Heart right ventricle (tissue), 16 donors: ENCODE measurements at regions of chr6 and their contacts with region 1.

Region 1: GRCh38 chr6:138287144-138287955 is 69.1 kb upstream of the PBOV1 start:
- DNase-seq: no peak
- ATAC-seq: peak in 5 of 8 donors; percentile 4 to 47 (median 28)
- H3K4me3 ChIP-seq: no peak overlapping the region
- H3K27ac ChIP-seq: no peak overlapping the region
- H3K4me1 ChIP-seq: no peaks in the 10 kb centered on the region
- H3K27me3 ChIP-seq: no peaks in the 10 kb centered on the region
- CTCF ChIP-seq: peak; percentile 10 to 65 (median 53)

Region 2: GRCh38 chr6:138001750-138002349 is 285.5 kb before region 1 on chr6:
- intact Hi-C with region 1: loop called in 2 of 10 experiments (anchors 10 kb)
- DNase-seq: peak in 1 of 2 donors; percentile 51
- ATAC-seq: peak in 3 of 8 donors; percentile 41 to 48 (median 47)
- H3K4me3 ChIP-seq: no peak overlapping the region
- H3K27ac ChIP-seq: no peak overlapping the region
- H3K4me1 ChIP-seq: peaks cover 0 to 3% (median 0%) of the 10 kb centered on the region in 9 donors
- H3K27me3 ChIP-seq: peaks cover 0 to 3% (median 0%) of the 10 kb centered on the region in 7 donors
- CTCF ChIP-seq: peak; percentile 67 to 91 (median 86)

Region 3: DNA sequence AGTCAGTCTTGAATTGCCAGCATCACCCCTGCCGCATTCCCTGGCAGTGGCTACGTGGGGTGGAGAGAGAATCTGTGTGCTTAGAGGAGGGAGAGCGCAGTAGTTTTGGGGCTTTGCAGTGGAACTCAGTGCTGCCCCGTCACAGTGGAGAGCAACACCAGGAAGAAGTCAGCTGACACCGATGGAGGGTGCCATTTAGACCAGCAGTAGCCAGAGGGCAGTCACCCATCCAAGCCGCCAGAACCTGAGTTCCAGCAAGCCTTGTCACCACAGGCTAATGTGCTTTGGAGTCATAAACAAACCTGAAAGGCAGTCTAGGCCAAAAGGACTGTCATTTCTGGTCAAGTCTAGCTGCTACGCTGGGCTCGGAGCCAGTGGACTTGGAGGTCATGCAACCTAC is 158.2 kb before region 1 on chr6:
- intact Hi-C with region 1: loop called in 1 of 10 experiments (anchors 5 kb)
- DNase-seq: no peak
- ATAC-seq: peak in 1 of 8 donors; percentile 27
- H3K4me3 ChIP-seq: no peak overlapping the region
- H3K27ac ChIP-seq: no peak overlapping the region
- H3K4me1 ChIP-seq: no peaks in the 10 kb centered on the region
- H3K27me3 ChIP-seq: no peaks in the 10 kb centered on the region
- CTCF ChIP-seq: peak in 4 of 9 donors; percentile 6 to 14 (median 10)

Region 4: GRCh38 chr6:138393871-138394783 is 106.8 kb after region 1 on chr6:
- intact Hi-C with region 1: loop called in 1 of 10 experiments (anchors 10 kb)
- DNase-seq: no peak
- ATAC-seq: peak; percentile 70 to 92 (median 82)
- H3K4me3 ChIP-seq: no peak overlapping the region
- H3K27ac ChIP-seq: peak overlapping the region in 1 of 10 donors; percentile 31
- H3K4me1 ChIP-seq: peaks cover 0 to 34% (median 7%) of the 10 kb centered on the region in 9 donors
- H3K27me3 ChIP-seq: no peaks in the 10 kb centered on the region
- CTCF ChIP-seq: no peak

Region 5: DNA sequence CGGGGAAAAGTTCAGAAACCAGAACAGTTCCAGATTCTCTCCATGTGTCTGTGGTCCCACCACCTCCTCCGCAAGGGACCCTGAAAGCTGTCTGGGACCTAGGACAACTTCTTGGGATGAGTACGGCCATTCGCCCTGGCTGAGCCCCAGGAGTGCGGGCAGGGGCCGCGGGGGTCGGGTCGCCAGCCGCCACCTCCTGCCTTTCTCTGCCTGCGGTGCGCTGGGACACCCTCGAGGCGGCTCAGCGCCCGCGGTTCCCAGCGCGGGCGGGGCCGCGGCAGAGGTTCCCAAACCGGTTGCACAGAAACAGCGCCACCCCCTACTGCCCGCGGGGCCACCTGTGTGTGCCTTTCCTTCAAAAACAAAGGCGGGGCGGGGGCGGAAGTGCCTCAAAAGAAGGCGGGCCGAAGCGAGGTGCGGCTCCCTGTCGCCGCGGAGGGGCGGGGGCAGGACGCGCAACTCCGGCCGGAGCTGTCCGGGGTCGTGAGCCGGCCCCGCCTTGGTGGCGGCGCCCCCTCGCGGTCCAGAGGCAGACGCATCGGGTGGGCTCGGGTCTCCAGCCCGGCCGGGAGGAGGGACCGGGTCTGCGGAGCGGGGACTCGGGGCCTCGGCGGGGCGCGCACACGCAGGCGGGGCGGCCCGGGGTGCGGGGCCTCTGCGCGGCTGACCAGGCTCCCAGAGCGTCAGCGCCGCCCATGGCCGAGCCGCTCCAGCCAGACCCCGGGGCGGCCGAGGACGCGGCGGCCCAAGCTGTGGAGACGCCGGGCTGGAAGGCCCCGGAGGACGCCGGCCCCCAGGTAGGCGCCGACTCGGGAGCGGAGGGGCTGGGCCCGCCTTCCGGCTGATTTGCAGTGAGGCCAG is 116.7 kb after region 1 on chr6 and contains the start of gene HEBP2:
- intact Hi-C with region 1: loop called in 3 of 10 experiments (anchors 5 to 10 kb)
- DNase-seq: peak; percentile 95
- ATAC-seq: peak; percentile 92 to 95 (median 94)
- H3K4me3 ChIP-seq: peak within 1 kb of the TSS; percentile 43 to 92 (median 78)
- H3K27ac ChIP-seq: peak within 1 kb of the TSS; percentile 86 to 98 (median 95)
- H3K4me1 ChIP-seq: peaks cover 0 to 28% (median 20%) of the 10 kb centered on the region in 9 donors
- H3K27me3 ChIP-seq: no peaks in the 10 kb centered on the region
- CTCF ChIP-seq: peak; percentile 51 to 82 (median 68)
- total RNA-seq, gene HEBP2: 88.4 to 108 (median 100) TPM

Region 6: GRCh38 chr6:138588805-138589434 is 301.6 kb after region 1 on chr6:
- intact Hi-C with region 1: loop called in 1 of 10 experiments (anchors 5 kb)
- DNase-seq: peak in 1 of 2 donors; percentile 73
- ATAC-seq: peak in 7 of 8 donors; percentile 39 to 68 (median 52)
- H3K4me3 ChIP-seq: no peak overlapping the region
- H3K27ac ChIP-seq: no peak overlapping the region
- H3K4me1 ChIP-seq: peaks cover 0 to 31% (median 8%) of the 10 kb centered on the region in 9 donors
- H3K27me3 ChIP-seq: no peaks in the 10 kb centered on the region
- CTCF ChIP-seq: peak; percentile 75 to 97 (median 92)